Activated CD8-positive, alpha-beta T cell treated with anti-CD3 and anti-CD28 coated beads, Interleukin-2, amount 10 ng/mL, durations not matched to agents 7 days and 5 days (primary cell): ENCODE measurements at regions of chr2 and their contacts with region 1.

Region 1: GRCh38 chr2:203814661-203815540 is 52.7 kb upstream of the CTLA4 start:
- DNase-seq: peak; percentile 68
- ATAC-seq: peak; percentile 72
- H3K4me3 Mint-ChIP-seq: peak overlapping the region; percentile 34
- H3K27ac Mint-ChIP-seq: no peak overlapping the region
- H3K4me1 Mint-ChIP-seq: peaks cover 49% of the 10 kb centered on the region
- H3K27me3 Mint-ChIP-seq: peaks cover 7% of the 10 kb centered on the region

Region 2: GRCh38 chr2:203453858-203454451 is 360.9 kb before region 1 on chr2:
- CTCF ChIA-PET with region 1: interaction called, 20 read pairs
- POLR2A ChIA-PET with region 1: no interaction called
- DNase-seq: peak; percentile 53
- ATAC-seq: no peak
- H3K4me3 Mint-ChIP-seq: no peak overlapping the region
- H3K27ac Mint-ChIP-seq: no peak overlapping the region
- H3K4me1 Mint-ChIP-seq: no peaks in the 10 kb centered on the region
- H3K27me3 Mint-ChIP-seq: no peaks in the 10 kb centered on the region

Region 3: DNA sequence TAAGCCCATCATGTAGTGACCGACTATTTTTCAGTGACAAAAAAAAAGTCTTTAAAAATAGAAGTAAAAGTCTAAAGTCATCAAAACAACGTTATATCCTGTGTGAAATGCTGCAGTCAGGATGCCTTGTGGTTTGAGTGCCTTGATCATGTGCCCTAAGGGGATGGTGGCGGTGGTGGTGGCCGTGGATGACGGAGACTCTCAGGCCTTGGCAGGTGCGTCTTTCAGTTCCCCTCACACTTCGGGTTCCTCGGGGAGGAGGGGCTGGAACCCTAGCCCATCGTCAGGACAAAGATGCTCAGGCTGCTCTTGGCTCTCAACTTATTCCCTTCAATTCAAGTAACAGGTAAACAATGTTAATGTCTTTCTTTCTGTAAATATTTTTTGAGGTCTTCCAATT is 108.5 kb before region 1 on chr2 and contains the start of gene CD28:
- CTCF ChIA-PET with region 1: interaction called, 24 read pairs
- POLR2A ChIA-PET with region 1: interaction called, 3 read pairs
- DNase-seq: peak; percentile 95
- ATAC-seq: peak; percentile 81
- H3K4me3 Mint-ChIP-seq: peak within 1 kb of the TSS; percentile 72
- H3K27ac Mint-ChIP-seq: peak within 1 kb of the TSS; percentile 87
- H3K4me1 Mint-ChIP-seq: peaks cover 66% of the 10 kb centered on the region
- H3K27me3 Mint-ChIP-seq: no peaks in the 10 kb centered on the region
- total RNA-seq, gene CD28: 25.6 to 27.2 TPM

Region 4: GRCh38 chr2:203740780-203741281 is 74.1 kb before region 1 on chr2:
- CTCF ChIA-PET with region 1: interaction called, 31 read pairs
- POLR2A ChIA-PET with region 1: interaction called, 13 read pairs
- DNase-seq: peak; percentile 57
- ATAC-seq: peak; percentile 83
- H3K4me3 Mint-ChIP-seq: peak overlapping the region; percentile 61
- H3K27ac Mint-ChIP-seq: peak overlapping the region; percentile 94
- H3K4me1 Mint-ChIP-seq: peaks cover 75% of the 10 kb centered on the region
- H3K27me3 Mint-ChIP-seq: no peaks in the 10 kb centered on the region

Region 5: GRCh38 chr2:203804070-203804469 is 10.8 kb before region 1 on chr2:
- CTCF ChIA-PET with region 1: interaction called, 36 read pairs
- POLR2A ChIA-PET with region 1: no interaction called
- DNase-seq: peak; percentile 49
- ATAC-seq: peak; percentile 77
- H3K4me3 Mint-ChIP-seq: peak overlapping the region; percentile 16
- H3K27ac Mint-ChIP-seq: peak overlapping the region; percentile 52
- H3K4me1 Mint-ChIP-seq: peaks cover 63% of the 10 kb centered on the region
- H3K27me3 Mint-ChIP-seq: no peaks in the 10 kb centered on the region

Region 6: DNA sequence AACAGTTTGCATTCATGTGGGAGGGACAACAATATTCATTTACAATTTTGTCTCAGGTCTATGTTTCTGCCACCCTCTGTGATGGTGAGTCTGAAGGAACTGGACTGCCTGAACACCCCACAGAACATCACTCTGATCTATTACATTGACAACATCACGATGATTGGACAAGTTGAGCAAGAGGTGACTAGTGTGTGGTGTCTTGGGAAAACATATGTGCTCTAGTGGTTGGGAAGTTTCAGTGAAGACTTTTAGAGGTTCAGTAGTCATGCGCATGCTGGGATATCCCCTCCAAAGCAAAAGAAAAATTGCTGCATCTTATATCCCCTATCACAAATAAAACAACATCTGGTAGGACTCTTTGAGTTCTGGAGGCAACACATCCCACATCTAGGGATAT is 34.1 kb after region 1 on chr2:
- CTCF ChIA-PET with region 1: no interaction called
- POLR2A ChIA-PET with region 1: no interaction called
- DNase-seq: no peak
- ATAC-seq: no peak
- H3K4me3 Mint-ChIP-seq: no peak overlapping the region
- H3K27ac Mint-ChIP-seq: no peak overlapping the region
- H3K4me1 Mint-ChIP-seq: peaks cover 12% of the 10 kb centered on the region
- H3K27me3 Mint-ChIP-seq: no peaks in the 10 kb centered on the region

Region 7: DNA sequence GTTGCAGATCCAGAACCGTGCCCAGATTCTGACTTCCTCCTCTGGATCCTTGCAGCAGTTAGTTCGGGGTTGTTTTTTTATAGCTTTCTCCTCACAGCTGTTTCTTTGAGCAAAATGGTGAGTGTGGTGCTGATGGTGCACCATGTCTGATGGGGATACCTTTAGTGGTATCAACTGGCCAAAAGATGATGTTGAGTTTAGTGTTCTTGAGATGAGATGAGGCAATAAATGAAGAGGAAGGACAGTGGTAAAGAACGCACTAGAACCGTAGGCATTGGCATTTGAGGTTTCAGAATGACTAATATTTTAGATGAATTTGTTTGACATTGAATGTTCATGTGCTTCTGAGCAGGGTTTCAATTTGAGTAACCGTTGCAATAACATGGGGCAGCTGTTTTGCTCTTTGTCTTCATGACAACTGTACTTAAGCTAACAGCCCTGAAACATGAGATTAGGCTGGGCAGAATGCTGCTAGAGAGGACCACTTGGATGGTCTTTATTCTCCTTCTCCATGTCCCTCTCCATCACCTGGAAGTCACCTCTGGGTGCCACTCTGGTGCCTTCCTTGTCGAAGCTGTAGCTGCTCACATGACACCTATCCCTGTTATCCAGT is 56.6 kb after region 1 on chr2:
- CTCF ChIA-PET with region 1: interaction called, 82 read pairs
- POLR2A ChIA-PET with region 1: interaction called, 9 read pairs
- DNase-seq: peak; percentile 72
- ATAC-seq: peak; percentile 70
- H3K4me3 Mint-ChIP-seq: peak overlapping the region; percentile 78
- H3K27ac Mint-ChIP-seq: peak overlapping the region; percentile 97
- H3K4me1 Mint-ChIP-seq: peaks cover 87% of the 10 kb centered on the region
- H3K27me3 Mint-ChIP-seq: no peaks in the 10 kb centered on the region